ENCODE measurements at regions of chr3 and their contacts with region 1.

Region 1: DNA sequence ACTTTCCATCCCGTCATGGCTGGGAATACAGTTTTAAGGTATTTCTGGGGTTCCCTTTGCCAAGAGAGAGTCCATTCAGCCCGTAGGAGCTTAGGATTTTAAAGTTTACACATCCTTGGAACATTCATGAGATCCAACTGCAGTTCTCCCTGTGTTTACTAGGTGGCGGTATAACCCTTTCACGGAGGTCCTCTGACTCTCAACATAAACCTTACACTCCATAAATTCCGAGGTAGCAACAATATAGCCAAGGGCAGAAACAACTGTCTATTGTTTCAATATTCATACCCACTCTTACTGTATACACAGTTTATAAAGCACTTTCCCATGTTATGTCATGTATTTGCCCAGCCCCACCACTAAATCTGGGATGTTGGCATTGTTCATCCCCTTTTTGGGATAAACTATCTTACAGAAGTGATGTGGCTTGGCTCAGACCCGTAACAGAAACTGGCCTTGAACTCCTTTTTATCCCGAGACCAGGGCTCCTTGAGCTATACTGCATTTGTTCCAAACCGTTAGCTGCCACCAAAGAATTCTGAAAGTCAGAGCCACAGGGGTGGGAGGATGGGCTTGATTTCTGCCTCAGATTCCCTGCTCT is 69.2 kb upstream of the COL6A5 start:
- DNase-seq: peak; percentile 66
- H3K4me3 Mint-ChIP-seq: no peak overlapping the region
- H3K27ac Mint-ChIP-seq: no peak overlapping the region
- H3K4me1 Mint-ChIP-seq: no peaks in the 10 kb centered on the region
- H3K27me3 Mint-ChIP-seq: peaks cover 20% of the 10 kb centered on the region
- CTCF ChIP-seq: peak; percentile 85

Region 2: DNA sequence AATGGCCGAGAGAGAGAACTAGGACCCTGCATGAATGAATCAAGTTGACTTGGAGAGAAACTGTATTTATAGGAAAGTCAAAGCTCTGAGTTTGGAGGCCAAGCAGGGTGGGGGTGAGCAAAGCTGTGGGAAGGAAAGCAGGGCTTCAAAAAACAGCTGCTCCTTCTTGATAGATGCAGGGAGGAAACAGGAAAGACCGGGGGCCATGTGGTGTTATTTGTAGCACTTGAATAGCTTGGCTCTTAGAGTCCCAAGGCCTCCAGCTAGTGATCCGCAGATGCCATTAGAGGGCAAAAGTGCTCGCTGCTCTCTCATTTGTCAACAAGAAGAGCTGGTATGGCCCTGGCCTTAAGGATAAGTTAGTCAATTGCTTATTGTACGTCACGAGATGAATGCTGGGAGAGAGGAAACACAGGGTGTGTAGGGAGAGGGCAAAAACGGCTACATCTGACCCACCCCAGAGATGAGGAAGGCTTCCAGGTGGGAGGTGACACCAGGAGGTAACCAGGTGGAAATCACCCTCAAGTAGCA is 194.9 kb before region 1 on chr3 and contains the start of gene ALG1L2:
- CTCF ChIA-PET with region 1: no interaction called
- POLR2A ChIA-PET with region 1: no interaction called
- intact Hi-C with region 1: no loop called
- DNase-seq: no peak
- H3K4me3 Mint-ChIP-seq: no peak within 1 kb of the TSS
- H3K27ac Mint-ChIP-seq: no peak within 1 kb of the TSS
- H3K4me1 Mint-ChIP-seq: no peaks in the 10 kb centered on the region
- H3K27me3 Mint-ChIP-seq: peaks cover 14% of the 10 kb centered on the region
- CTCF ChIP-seq: no peak
- total RNA-seq, gene ALG1L2: not detected in 2 replicates

Region 3: GRCh38 chr3:130258532-130258952 is 17.8 kb before region 1 on chr3:
- CTCF ChIA-PET with region 1: interaction called, 10 read pairs
- POLR2A ChIA-PET with region 1: interaction called, 3 read pairs
- intact Hi-C with region 1: no loop called
- DNase-seq: peak; percentile 62
- H3K4me3 Mint-ChIP-seq: no peak overlapping the region
- H3K27ac Mint-ChIP-seq: no peak overlapping the region
- H3K4me1 Mint-ChIP-seq: peaks cover 7% of the 10 kb centered on the region
- H3K27me3 Mint-ChIP-seq: no peaks in the 10 kb centered on the region
- CTCF ChIP-seq: no peak

Region 4: GRCh38 chr3:130288670-130289069 is 12.4 kb after region 1 on chr3:
- CTCF ChIA-PET with region 1: interaction called, 16 read pairs
- POLR2A ChIA-PET with region 1: no interaction called
- intact Hi-C with region 1: no loop called
- DNase-seq: no peak
- H3K4me3 Mint-ChIP-seq: no peak overlapping the region
- H3K27ac Mint-ChIP-seq: no peak overlapping the region
- H3K4me1 Mint-ChIP-seq: no peaks in the 10 kb centered on the region
- H3K27me3 Mint-ChIP-seq: peaks cover 66% of the 10 kb centered on the region
- CTCF ChIP-seq: no peak

Region 5: GRCh38 chr3:130539005-130539404 is 262.7 kb after region 1 on chr3:
- CTCF ChIA-PET with region 1: interaction called, 54 read pairs
- POLR2A ChIA-PET with region 1: interaction called, 3 read pairs
- intact Hi-C with region 1: loop called (anchors 1 kb)
- DNase-seq: peak; percentile 63
- H3K4me3 Mint-ChIP-seq: no peak overlapping the region
- H3K27ac Mint-ChIP-seq: no peak overlapping the region
- H3K4me1 Mint-ChIP-seq: no peaks in the 10 kb centered on the region
- H3K27me3 Mint-ChIP-seq: peaks cover 20% of the 10 kb centered on the region
- CTCF ChIP-seq: peak; percentile 60

Region 6: DNA sequence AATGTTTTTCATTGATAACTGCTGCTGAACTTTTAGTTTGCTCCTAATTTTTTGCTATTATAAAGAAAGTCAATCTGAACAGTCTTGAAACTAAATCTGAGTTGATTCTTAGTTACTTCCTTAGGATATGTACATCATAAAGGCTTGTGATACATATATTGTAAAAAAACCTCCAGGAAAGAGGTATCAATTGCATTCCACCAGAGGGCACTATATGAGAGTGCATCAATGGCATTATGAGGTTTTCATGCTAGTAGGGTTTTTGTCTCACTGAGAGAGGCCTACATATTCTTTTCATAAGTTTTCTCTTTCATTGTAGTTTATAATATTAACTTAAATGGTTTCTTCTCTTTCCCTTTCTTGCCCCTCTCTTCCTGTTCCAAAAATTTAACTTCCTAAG is 423.5 kb after region 1 on chr3:
- CTCF ChIA-PET with region 1: no interaction called
- POLR2A ChIA-PET with region 1: no interaction called
- intact Hi-C with region 1: loop called (anchors 10 kb)
- DNase-seq: peak; percentile 44
- H3K4me3 Mint-ChIP-seq: no peak overlapping the region
- H3K27ac Mint-ChIP-seq: no peak overlapping the region
- H3K4me1 Mint-ChIP-seq: no peaks in the 10 kb centered on the region
- H3K27me3 Mint-ChIP-seq: no peaks in the 10 kb centered on the region
- CTCF ChIP-seq: peak; percentile 29